PC-3 (cell line): ENCODE measurements at regions of chr1 and their contacts with region 1.

Region 1: GRCh38 chr1:92291372-92291999 is 7.3 kb downstream of the GLMN start:
- DNase-seq: peak; percentile 75
- ATAC-seq: peak; percentile 84
- H3K4me3 ChIP-seq: no peak overlapping the region
- H3K27ac ChIP-seq: no peak overlapping the region
- H3K4me1 ChIP-seq: no peaks in the 10 kb centered on the region
- H3K27me3 ChIP-seq: no peaks in the 10 kb centered on the region
- CTCF ChIP-seq: peak; percentile 89

Region 2: GRCh38 chr1:91754348-91754747 is 537.1 kb before region 1 on chr1:
- CTCF ChIA-PET with region 1: no interaction called
- POLR2A ChIA-PET with region 1: no interaction called
- intact Hi-C with region 1: no loop called
- DNase-seq: peak; percentile 51
- ATAC-seq: peak; percentile 59
- H3K4me3 ChIP-seq: no peak overlapping the region
- H3K27ac ChIP-seq: no peak overlapping the region
- H3K4me1 ChIP-seq: no peaks in the 10 kb centered on the region
- H3K27me3 ChIP-seq: no peaks in the 10 kb centered on the region
- CTCF ChIP-seq: no peak

Region 3: GRCh38 chr1:91929250-91929649 is 362.2 kb before region 1 on chr1:
- CTCF ChIA-PET with region 1: interaction called, 16 read pairs
- POLR2A ChIA-PET with region 1: no interaction called
- intact Hi-C with region 1: loop called (anchors 2 kb)
- DNase-seq: no peak
- ATAC-seq: no peak
- H3K4me3 ChIP-seq: no peak overlapping the region
- H3K27ac ChIP-seq: no peak overlapping the region
- H3K4me1 ChIP-seq: no peaks in the 10 kb centered on the region; the same call in 1 of the 2 replicates
- H3K27me3 ChIP-seq: no peaks in the 10 kb centered on the region
- CTCF ChIP-seq: no peak

Region 4: DNA sequence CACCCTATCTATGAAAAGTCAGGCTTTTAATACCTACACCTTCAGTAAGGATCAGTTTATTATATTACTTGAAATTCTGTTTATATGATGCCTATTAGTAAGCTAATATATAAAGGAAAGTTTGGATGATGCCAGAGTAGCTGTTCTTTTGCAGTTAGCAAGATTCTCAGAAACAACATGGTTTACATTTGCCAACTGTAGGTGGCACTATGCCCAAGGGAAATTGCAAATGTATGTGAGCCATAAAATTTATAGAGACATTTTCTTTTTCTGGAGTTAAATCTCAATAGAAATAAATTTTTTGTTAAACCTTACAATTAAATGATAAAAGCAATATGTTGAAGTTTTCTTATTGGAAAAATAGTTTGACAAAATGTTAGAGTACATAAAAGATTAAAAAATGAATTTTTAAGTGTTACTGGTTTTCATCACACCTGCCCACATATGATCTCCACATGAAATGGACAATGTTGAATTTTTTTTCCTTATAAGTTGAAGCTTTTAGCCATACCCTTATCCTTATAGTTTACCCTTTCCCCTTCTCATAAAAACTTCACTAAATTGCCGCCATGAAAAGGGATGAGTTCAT is 293.8 kb before region 1 on chr1:
- CTCF ChIA-PET with region 1: interaction called, 19 read pairs
- POLR2A ChIA-PET with region 1: no interaction called
- intact Hi-C with region 1: loop called (anchors 1 kb)
- DNase-seq: peak; percentile 76
- ATAC-seq: peak; percentile 51; the same call in 1 of the 2 replicates
- H3K4me3 ChIP-seq: no peak overlapping the region
- H3K27ac ChIP-seq: no peak overlapping the region
- H3K4me1 ChIP-seq: no peaks in the 10 kb centered on the region
- H3K27me3 ChIP-seq: no peaks in the 10 kb centered on the region
- CTCF ChIP-seq: peak; percentile 83

Region 5: DNA sequence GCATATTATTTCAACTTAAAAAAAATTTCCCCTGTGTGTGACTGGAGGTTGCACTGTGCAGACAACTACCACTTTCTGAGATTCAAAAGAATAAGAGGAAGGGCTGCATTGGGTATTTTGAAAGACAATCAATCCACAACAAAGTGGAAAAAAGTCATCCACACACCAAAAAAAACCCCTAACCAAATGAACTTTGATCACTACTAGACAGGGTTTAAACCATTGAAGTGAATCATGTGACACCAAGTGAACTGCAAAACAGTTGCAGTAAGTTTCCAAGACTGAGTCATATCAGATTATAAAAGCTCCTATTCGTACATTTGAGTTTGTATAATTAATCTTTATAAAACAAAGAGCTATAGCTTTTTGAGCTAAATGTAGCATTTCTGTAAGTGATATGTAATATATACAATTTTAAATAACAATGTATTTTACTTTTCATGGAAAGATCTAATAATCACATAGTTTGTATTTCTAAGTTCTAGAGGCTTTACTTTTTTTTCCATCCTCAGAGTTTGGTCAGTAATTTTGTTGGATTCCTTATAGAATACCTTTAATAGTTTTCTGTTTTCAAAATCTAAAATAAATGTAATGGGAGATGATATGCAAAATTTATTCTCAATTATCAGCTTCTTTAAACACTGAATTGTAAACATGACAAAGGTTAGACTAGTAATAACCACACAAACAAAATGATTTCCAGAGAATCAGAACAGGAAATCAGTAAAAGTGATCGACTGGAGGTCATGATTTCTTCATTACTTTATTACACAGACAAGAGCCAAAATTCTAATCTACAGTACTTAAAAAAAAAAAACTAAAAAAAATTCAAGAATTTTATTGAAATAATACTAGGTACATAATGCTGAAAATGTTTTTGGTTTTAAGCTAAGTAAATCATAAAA is 245.7 kb after region 1 on chr1:
- CTCF ChIA-PET with region 1: no interaction called
- POLR2A ChIA-PET with region 1: no interaction called
- intact Hi-C with region 1: no loop called
- DNase-seq: peak; percentile 26
- ATAC-seq: peak; percentile 15; the same call in 1 of the 2 replicates
- H3K4me3 ChIP-seq: no peak overlapping the region
- H3K27ac ChIP-seq: no peak overlapping the region
- H3K4me1 ChIP-seq: peaks cover 8% of the 10 kb centered on the region
- H3K27me3 ChIP-seq: no peaks in the 10 kb centered on the region
- CTCF ChIP-seq: no peak